Posterior cingulate gyrus (tissue), 11 donors: ENCODE measurements at regions of chr16 and their contacts with region 1.

Region 1: GRCh38 chr16:81095953-81096717 is at the start of gene GCSH:
- DNase-seq: peak; percentile 98 to 100 (median 100)

Region 2: DNA sequence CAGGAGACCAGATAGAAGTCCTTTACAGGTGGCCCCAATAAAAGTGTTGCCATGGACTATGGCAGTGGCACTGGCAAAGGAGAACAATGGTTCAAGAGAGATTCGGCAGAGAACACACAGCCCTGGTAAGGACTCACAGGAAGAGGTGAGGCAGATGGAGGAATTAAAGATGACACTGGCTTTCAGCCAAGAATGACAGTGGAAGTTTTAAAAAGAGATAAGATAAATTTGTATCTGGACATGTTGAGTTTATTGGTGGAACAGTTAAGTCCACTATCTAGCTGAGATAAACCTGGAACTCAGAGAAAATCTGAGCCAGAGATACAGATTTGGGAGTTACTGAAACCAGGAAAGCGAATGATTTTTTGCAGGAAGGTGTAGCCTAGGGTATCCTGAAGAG is 109.6 kb before region 1 on chr16:
- intact Hi-C with region 1: no loop called
- DNase-seq: no peak

Region 3: GRCh38 chr16:81035398-81035974 is 60.6 kb before region 1 on chr16 and contains the start of gene ATMIN:
- intact Hi-C with region 1: loop called (anchors 5 kb)
- DNase-seq: peak; percentile 61 to 97 (median 77)

Region 4: DNA sequence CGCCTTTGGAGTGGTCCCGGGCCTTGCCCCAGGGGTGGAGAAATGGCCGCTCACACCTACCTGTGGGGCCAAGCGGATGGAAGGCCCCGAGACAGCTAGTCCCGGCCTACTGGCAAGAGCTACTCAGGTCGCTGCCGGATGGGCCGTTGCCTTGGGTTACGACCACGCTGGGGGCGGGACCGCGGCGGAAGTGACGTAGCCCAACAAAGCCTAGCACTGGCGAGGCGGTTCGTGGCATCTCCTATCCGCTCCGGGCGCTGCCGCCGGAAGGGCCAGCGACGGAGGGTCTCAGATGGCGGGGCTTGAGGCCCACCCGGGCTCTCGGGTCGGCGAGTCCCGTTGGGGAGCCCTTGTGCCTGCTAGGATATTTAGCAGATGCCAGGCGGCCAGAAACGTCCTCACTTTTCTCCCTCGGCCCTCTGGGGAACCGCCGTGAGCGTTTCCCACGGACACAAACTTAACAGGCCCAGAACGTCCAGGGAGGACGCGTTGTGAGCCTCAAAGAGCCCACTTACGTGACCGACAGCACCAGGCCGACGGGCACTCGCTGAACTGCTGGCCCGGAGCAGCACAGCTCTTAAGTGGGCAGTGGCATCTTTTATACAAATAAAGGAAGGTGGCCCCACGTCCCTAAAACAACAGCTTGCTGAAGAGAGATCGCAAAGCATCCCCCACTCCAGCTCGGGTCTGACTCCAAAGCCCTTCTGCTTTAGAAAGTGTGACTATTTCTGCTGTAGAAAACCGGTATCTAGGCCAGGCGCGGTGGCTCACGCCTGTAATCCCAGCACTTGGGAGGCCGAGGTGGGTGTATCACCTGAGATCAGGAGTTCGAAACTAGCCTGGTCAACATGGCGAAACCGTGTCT is 18.8 kb before region 1 on chr16 and contains the start of gene C16orf46:
- intact Hi-C with region 1: loop called (anchors 1 kb)
- DNase-seq: peak; percentile 98 to 100 (median 99)

Region 5: GRCh38 chr16:81204798-81205680 is 108.9 kb after region 1 on chr16:
- intact Hi-C with region 1: loop called (anchors 10 kb)
- DNase-seq: peak in 4 of 10 donors; percentile 31 to 66 (median 54)

Region 6: DNA sequence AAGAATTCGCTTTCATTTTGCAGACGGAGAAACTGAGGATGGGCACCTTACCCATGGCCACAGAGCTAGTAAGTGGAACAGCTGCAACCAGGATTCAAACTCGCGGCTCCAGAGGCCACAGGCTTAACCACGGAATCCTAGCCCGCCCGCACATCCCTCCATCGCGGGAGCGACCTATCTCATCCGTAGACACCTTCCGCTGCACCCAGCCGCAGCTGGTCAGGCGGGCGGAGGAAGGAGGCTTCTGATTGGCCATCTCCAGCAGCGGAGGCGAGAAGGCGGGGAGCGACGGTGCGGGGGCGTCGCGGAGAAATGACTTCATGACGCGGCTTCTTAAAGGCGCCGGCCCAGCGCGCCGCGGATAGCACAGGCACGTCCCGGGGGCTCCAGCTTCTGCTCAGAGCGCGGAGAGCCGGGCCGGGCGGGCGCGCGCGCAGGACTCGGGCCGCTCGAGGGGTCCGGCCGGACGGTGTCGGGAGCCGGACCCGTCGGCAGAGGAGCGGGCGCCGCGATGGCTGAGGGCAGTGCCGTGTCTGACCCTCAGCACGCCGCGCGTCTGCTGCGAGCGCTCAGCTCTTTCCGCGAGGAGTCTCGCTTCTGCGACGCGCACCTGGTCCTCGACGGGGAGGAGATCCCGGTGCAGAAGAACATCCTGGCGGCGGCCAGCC is 218.6 kb after region 1 on chr16 and contains the start of gene GAN:
- intact Hi-C with region 1: loop called (anchors 5 kb)
- DNase-seq: peak; percentile 94 to 99 (median 96)